Motor neuron (in vitro differentiated cells): ENCODE measurements at regions of chr1 and their contacts with region 1.

Region 1: DNA sequence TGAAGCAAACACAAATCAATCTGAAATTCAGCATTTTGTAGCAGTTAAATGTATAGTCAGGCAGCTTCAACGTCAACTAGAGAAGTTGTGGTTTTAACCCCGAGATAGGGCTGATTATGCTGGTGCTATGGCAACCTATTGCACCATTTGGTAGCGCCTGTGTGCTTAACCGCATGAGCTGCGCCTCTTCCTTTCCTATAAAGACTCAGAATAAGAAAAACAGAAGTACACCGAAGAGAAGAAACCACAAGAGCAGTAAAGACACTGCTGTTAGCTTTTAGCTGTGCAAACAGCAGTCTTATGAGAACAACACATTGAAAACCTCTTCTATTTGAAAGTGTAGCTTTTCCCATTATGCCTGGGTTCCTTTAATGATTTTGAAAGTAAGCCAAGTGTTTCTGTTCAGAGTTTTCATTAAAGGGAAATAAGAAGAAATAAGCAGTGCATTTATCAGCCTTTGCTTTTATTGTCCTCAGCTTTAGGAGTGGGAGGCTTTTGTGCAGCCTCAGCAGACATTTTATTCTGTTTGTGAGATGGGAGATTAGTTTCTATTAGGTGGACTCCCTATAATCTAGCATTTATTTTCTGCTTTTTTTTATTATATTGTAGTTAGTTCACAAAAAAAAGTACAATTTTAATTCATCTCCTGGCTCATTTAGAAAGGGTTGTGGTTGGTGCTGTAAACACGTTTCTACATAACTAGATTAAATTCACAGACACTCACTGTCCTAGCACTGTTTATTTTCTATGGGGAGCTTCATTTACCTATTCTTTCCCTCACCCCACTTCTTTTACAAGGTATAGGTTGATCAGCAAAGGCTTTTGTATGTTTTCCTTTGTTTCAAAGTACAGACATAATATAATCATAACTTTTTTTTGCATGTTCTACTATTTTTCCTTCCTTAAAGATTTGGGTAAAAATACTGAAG is 43.3 kb downstream of the PTPRC start:
- ATAC-seq: peak; percentile 83 to 98 (median 92)
- H3K4me3 ChIP-seq: peak overlapping the region in 1 of 5 donors; percentile 0
- H3K27ac ChIP-seq: peak overlapping the region; percentile 21 to 35
- H3K4me1 ChIP-seq: peaks cover 28 to 44% of the 10 kb centered on the region in 2 donors

Region 2: GRCh38 chr1:197902454-197903195 is 779.5 kb before region 1 on chr1 and contains the start of gene C1orf53:
- in situ Hi-C with region 1: loop called in 2 of 9 experiments (anchors 25 kb)
- ATAC-seq: peak; percentile 93 to 96 (median 95)
- H3K4me3 ChIP-seq: peak within 1 kb of the TSS; percentile 69 to 97 (median 77)
- H3K27ac ChIP-seq: peak within 1 kb of the TSS; percentile 89 to 95
- H3K4me1 ChIP-seq: peaks cover 8 to 9% of the 10 kb centered on the region in 2 donors
- total RNA-seq, gene C1orf53: 4.3 to 40.9 (median 10.1) TPM

Region 3: DNA sequence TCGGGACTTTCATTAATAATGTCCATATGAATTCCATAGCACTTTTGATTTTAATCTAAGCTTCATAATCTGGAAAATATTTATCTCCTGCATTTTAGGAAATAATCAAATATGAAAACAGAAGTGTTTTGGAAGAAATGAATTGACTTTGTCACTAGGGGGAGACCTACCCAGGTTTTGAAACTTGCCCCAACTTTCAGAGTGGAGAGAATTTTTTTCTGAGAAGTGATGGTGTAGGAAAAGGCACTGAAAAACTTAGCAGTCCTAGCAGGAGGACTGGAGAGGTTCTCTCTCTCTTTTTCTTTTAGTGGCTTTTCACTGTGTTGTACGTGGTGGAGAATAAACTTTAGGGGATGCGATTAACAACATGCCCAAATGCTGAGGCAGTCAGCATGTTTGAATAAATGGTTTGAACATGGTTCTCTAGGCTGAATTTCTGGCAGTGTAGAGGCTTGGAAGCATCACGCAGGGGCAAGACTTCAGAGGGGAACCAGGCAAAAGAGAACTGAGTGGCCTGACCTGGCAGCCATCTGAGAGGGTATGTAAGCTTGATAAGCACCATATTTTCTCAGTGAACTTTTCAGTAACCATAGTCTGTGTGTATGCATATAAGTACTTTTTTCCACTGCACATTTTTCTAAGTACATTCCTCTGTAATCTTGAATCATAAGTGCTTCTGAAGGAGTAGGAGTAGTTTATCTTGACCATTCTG is 593.6 kb before region 1 on chr1:
- in situ Hi-C with region 1: loop called in 1 of 9 experiments (anchors 25 kb)
- ATAC-seq: peak in 2 of 8 experiments; percentile 34 to 37
- H3K4me3 ChIP-seq: no peak overlapping the region
- H3K27ac ChIP-seq: no peak overlapping the region
- H3K4me1 ChIP-seq: peaks cover 0 to 7% of the 10 kb centered on the region in 2 donors

Region 4: DNA sequence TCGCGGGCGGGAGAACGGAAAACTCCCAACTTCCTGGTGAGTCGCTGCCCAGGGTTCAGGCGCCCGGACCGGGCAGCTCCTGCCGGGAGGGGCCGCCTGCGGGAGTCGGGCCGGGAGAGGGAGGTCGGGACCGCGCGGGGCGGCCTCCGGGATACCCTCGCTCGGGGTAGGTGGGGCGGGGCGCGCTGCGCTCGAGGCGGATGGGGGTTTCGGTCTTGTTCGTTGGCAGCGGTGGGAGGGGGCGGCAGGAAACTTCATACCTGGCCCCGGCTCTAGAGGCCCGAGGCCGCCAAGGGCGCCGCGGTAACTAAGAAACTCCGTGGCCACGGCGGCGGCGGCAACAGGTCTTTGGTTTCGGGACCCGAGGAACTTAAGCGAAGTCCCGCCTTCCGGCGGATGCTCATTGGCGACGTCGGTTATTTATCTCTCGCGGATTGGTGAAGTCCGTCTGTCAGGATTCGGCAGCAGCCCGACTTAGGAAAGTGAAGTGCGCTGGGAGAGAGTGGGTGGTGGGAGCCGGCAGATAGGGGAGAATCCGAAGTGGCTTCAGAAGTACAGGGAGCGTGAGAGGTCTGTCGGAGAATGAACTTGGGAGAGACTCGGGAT is 524.8 kb before region 1 on chr1:
- in situ Hi-C with region 1: loop called in 1 of 9 experiments (anchors 25 kb)
- ATAC-seq: peak; percentile 46 to 59 (median 55)
- H3K4me3 ChIP-seq: peak overlapping the region; percentile 82 to 95 (median 88)
- H3K27ac ChIP-seq: peak overlapping the region; percentile 57 to 81
- H3K4me1 ChIP-seq: peaks cover 6 to 11% of the 10 kb centered on the region in 2 donors

Region 5: DNA sequence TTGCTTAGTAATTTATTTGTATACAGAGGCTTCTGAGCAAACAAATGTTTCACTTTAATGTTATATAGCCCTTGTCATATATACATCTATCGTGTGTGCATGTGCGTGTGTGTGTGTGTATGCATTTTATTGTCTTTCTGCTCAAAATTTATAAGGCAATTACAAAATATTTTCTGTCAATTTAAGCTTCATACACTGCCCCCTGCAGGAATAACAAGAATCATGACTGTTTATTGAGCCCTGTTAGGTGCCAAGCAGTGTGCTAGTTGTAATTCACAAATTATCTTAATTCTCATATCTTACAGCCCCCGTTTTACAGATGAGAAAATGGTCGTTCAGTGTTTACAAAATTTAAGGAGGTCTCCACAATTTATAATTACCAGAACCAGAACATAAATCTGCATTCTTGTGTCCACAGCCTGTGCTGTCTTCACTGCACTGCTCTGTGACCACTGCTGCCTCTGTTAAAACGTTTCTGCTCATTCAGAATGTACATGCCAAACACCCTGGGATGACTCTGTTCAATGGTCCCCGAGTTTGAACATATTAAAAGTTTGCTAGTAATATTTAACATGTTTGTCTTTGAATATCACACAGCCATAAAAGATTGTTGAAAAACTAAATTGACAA is 323.0 kb before region 1 on chr1:
- in situ Hi-C with region 1: loop called in 1 of 9 experiments (anchors 25 kb)
- ATAC-seq: no peak
- H3K4me3 ChIP-seq: no peak overlapping the region
- H3K27ac ChIP-seq: no peak overlapping the region
- H3K4me1 ChIP-seq: peaks cover 4 to 47% of the 10 kb centered on the region in 2 donors

Region 6: DNA sequence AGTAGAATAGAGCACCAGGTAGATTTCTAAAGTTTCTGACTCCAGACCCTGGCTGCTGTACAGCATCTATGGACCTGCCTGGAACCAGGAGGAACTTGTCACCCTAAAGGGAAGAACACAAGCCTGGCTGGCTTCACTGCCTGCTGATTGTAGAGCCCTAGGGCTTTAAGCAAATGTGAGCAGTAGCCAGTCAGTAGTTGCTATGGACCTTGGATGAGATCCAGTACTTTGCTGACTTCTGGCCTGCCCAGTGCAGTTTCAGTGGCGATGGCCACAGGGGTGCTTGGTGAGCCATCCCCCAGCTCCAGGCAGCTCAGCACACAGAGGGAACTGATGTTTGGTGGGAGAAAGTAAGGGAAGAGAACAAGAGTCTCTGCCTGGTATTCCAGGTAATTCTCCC is 210.0 kb before region 1 on chr1:
- in situ Hi-C with region 1: loop called in 2 of 9 experiments (anchors 10 to 25 kb)
- ATAC-seq: peak in 4 of 8 experiments; percentile 27 to 87 (median 64)
- H3K4me3 ChIP-seq: no peak overlapping the region
- H3K27ac ChIP-seq: no peak overlapping the region
- H3K4me1 ChIP-seq: no peaks in the 10 kb centered on the region